Activated B cell treated with CpG ODN at 0.5 μM for 24 hours (primary cell): ENCODE measurements at regions of chr15 and their contacts with region 1.

Region 1: GRCh38 chr15:59063042-59063441 is 41.9 kb upstream of the CCNB2 start:
- DNase-seq: no peak
- ATAC-seq: no peak
- H3K4me3 Mint-ChIP-seq: no peak overlapping the region
- H3K27ac Mint-ChIP-seq: no peak overlapping the region
- H3K4me1 Mint-ChIP-seq: peaks cover 18% of the 10 kb centered on the region
- H3K27me3 Mint-ChIP-seq: no peaks in the 10 kb centered on the region
- CTCF ChIP-seq: no peak

Region 2: DNA sequence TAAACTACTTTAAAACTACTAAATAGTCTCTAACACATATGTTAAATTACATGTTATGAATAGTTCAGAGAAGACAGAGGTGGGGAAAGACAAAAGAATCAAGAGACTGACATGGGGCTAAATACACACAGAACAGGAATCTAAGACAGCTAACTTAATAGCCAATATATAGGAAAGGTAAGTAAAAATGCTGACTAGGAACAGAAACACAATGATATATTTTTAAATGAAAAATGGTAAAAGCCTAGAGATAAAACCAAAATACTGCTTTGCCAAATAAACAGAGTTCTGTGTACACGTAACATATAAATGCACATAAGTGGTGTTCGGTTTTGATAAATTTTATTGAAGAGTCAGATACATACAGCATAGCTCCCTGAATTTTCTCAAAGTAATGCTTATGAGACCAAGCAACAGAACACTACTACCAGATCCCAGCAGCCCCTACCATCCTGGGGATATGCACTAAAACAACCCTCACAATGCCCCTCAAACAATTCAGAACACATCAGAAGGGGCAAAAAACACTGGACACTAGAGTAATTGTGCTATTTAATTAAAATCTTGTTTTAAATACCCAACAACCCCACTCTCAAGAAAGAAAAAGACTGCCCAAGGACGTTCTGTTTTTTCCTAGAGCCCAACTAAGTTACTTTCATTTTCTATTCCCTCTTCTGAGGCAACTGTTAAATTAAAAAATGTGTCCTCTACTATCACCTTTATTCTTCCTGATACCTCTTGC is 434.7 kb before region 1 on chr15:
- CTCF ChIA-PET with region 1: no interaction called
- POLR2A ChIA-PET with region 1: no interaction called
- intact Hi-C with region 1: no loop called
- DNase-seq: no peak
- ATAC-seq: no peak
- H3K4me3 Mint-ChIP-seq: peak overlapping the region; percentile 74
- H3K27ac Mint-ChIP-seq: peak overlapping the region; percentile 81
- H3K4me1 Mint-ChIP-seq: peaks cover 29% of the 10 kb centered on the region
- H3K27me3 Mint-ChIP-seq: no peaks in the 10 kb centered on the region
- CTCF ChIP-seq: no peak

Region 3: DNA sequence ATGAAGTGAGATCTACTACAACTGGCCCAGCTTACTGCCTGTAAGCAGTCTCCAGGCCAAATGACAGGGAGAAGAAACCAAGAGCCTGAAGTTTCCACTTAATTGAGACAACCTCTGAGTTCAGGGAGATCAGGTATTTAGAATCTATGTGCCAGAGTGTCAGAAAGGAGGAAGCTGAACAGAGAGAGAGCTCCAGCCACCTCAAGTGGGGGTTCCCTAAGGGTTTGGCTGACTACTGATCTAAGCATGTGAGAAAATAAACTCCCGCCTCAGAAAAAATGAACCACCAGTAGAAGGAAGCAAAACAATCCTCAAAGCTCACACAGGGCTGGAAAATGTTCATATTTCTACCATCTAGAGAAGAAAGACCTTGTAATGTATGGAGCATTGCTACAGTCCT is 338.6 kb before region 1 on chr15:
- CTCF ChIA-PET with region 1: no interaction called
- POLR2A ChIA-PET with region 1: interaction called, 12 read pairs
- intact Hi-C with region 1: no loop called
- DNase-seq: no peak
- ATAC-seq: peak; percentile 92
- H3K4me3 Mint-ChIP-seq: peak overlapping the region; percentile 19
- H3K27ac Mint-ChIP-seq: peak overlapping the region; percentile 74
- H3K4me1 Mint-ChIP-seq: peaks cover 64% of the 10 kb centered on the region
- H3K27me3 Mint-ChIP-seq: no peaks in the 10 kb centered on the region
- CTCF ChIP-seq: no peak

Region 4: DNA sequence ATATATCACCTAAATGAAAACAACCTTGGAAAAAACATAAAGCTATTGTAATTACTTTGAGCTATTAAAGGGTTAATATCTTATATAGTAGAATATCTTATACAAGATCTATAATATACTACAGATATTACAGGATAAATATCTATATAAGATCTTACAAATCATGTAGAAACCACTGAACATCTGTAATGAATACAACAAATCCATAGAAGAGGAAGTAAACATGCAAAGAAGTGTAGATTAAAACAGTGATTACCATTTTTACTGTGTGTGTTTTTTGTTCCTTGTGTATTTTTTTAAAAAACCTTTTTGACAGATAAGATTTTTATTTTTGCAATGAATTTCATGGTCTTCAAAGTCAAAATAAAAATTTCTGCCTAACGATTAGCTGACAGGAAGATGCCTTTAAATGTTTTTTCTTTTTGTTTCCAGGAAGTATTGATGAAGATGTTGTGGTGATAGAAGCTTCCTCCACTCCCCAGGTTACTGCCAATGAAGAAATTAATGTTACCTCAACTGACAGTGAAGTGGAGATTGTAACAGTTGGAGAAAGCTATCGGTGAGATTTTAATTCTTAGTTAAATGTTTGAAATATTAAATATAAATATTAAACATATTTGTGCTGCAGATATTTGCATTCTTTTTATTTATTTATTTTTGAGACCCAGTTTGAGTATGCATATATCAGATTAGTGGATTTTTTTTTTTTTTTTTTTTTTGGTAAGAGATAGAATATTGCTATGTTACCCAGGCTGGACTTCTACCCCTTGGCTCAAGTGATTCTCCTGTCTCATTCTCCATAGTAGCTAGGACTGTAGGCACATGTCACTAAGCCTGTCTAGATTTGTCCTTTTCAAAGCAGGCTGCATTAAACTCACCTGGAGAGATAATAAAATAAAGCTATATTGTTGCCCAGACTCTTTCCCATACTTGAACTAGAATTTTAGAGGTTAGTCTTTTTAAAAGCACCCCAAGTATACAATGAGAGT is 10.9 kb before region 1 on chr15:
- CTCF ChIA-PET with region 1: no interaction called
- POLR2A ChIA-PET with region 1: no interaction called
- intact Hi-C with region 1: loop called (anchors 2 kb)
- DNase-seq: no peak
- ATAC-seq: no peak
- H3K4me3 Mint-ChIP-seq: no peak overlapping the region
- H3K27ac Mint-ChIP-seq: peak overlapping the region; percentile 50
- H3K4me1 Mint-ChIP-seq: peaks cover 11% of the 10 kb centered on the region
- H3K27me3 Mint-ChIP-seq: no peaks in the 10 kb centered on the region
- CTCF ChIP-seq: no peak

Region 5: DNA sequence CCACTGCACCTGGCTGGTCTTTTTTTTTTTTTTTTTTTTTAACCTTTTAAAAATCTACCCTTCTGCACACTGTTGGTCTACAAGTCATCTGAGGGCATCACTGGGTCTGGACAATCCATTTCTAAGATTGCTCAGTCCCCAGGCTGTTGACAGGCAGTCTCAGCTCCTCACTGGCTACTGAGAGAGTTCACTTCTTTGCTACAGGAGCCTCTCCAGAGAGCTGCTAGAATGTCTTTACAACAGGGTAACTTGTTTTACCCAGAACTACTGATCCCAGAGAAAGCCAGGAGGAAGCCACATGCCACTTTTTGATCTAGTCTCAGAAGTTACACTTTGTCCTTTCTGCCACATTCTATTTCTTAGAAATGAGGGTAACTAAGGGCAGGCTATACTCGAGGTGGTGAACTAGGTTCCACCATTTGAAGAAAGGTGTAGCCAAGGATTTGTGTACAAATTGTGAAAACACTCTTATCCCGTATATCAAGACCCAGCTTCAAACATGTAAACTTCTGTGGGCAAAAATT is 36.2 kb after region 1 on chr15:
- CTCF ChIA-PET with region 1: no interaction called
- POLR2A ChIA-PET with region 1: no interaction called
- intact Hi-C with region 1: loop called (anchors 5 kb)
- DNase-seq: no peak
- ATAC-seq: no peak
- H3K4me3 Mint-ChIP-seq: no peak overlapping the region
- H3K27ac Mint-ChIP-seq: no peak overlapping the region
- H3K4me1 Mint-ChIP-seq: peaks cover 3% of the 10 kb centered on the region
- H3K27me3 Mint-ChIP-seq: no peaks in the 10 kb centered on the region
- CTCF ChIP-seq: no peak